Activated CD4-positive, alpha-beta memory T cell treated with anti-CD3 and anti-CD28 coated beads, Interleukin-2, amount 10 ng/mL, durations not matched to agents 7 days and 5 days (primary cell): ENCODE measurements at regions of chr12 and their contacts with region 1.

Region 1: GRCh38 chr12:67578976-67579661 is 69.4 kb upstream of the DYRK2 start:
- DNase-seq: peak; percentile 31
- H3K4me3 Mint-ChIP-seq: peak overlapping the region; percentile 18
- H3K27ac Mint-ChIP-seq: peak overlapping the region; percentile 84
- H3K4me1 Mint-ChIP-seq: peaks cover 23% of the 10 kb centered on the region
- H3K27me3 Mint-ChIP-seq: peaks cover 14% of the 10 kb centered on the region

Region 2: GRCh38 chr12:67630373-67631088 is 51.4 kb after region 1 on chr12:
- CTCF ChIA-PET with region 1: no interaction called
- POLR2A ChIA-PET with region 1: interaction called, 14 read pairs
- DNase-seq: peak; percentile 91
- H3K4me3 Mint-ChIP-seq: peak overlapping the region; percentile 23
- H3K27ac Mint-ChIP-seq: peak overlapping the region; percentile 90
- H3K4me1 Mint-ChIP-seq: peaks cover 44% of the 10 kb centered on the region
- H3K27me3 Mint-ChIP-seq: peaks cover 9% of the 10 kb centered on the region